ENCODE measurements at regions of chr5 and their contacts with region 1.

Region 1: DNA sequence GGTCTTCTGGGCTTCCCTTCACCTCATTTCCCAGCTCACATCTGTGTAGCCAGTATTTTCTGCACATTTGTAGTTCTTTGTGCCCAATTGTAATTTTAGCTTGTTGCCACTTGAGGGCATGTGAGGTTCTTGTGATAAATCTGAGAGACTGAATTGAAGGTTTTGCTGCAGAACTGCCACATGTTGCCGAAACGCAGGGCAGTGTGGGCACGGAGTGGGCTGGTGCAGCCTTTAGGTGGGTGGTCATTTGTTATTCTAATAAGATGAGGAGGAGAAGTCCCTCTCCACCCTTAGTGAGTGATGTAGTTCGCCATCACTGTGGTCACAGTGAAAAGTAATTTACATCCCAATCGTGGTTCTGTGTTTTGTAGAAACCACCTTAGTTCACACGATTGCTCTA is 21.2 kb downstream of the OTULIN start:
- DNase-seq: peak; percentile 68
- ATAC-seq: peak; percentile 96
- H3K4me3 ChIP-seq: no peak overlapping the region
- H3K27ac ChIP-seq: no peak overlapping the region
- H3K4me1 ChIP-seq: no peaks in the 10 kb centered on the region
- H3K27me3 ChIP-seq: no peaks in the 10 kb centered on the region
- CTCF ChIP-seq: peak; percentile 64 to 74 (median 71); a peak in 5 of 6 replicates
- EP300 ChIP-seq: no peak
- POLR2A ChIP-seq: no peak
- RAD21 ChIP-seq: peak; percentile 72

Region 2: GRCh38 chr5:14521748-14522147 is 164.0 kb before region 1 on chr5:
- CTCF ChIA-PET with region 1: no interaction called
- POLR2A ChIA-PET with region 1: no interaction called
- RAD21 ChIA-PET with region 1: no interaction called
- SMC1A ChIA-PET with region 1: no interaction called
- in situ Hi-C with region 1: no loop called
- intact Hi-C with region 1: no loop called
- DNase-seq: no peak
- ATAC-seq: no peak; the same call in 2 of the 3 replicates
- H3K4me3 ChIP-seq: no peak overlapping the region
- H3K27ac ChIP-seq: no peak overlapping the region
- H3K4me1 ChIP-seq: peaks cover 10% of the 10 kb centered on the region
- H3K27me3 ChIP-seq: no peaks in the 10 kb centered on the region
- CTCF ChIP-seq: no peak
- EP300 ChIP-seq: no peak
- POLR2A ChIP-seq: no peak
- RAD21 ChIP-seq: no peak

Region 3: DNA sequence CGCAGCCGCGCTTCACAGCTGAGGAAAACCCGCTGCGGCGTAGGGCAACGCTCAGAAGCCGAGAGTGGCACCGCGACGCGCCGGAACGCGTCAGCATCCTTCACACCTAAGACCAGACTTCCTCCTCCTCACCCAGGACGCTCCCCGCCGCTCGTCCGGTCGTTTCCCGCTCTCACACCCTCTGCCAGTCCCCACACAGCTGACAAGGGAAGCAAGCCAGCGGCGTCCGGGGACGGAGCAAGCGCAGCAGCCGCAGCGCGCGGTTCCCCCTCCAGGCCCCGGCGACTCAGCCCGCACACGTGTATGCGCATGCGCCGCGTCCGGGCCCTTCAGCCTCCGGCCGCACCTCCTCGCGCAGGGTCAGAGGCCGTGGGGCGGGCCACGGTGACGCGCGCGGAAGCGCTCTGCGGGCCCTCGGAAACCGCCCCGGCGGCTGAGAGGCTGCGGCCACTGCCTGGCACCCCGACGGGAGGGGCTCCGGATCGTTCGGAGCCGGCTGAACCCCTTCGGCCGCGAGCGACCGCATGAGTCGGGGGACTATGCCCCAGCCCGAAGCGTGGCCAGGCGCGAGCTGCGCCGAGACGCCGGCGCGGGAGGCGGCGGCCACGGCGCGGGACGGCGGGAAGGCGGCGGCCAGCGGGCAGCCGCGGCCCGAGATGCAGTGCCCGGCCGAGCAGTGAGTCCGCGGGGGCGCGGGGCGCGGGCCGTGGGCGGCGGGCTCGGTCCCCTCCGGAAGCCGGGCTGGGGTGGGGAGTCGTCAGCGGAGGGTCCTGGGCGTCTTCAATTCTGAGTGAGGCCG is 21.3 kb before region 1 on chr5 and contains the start of gene OTULIN:
- CTCF ChIA-PET with region 1: interaction called, 7 read pairs
- POLR2A ChIA-PET with region 1: interaction called, 7 read pairs
- RAD21 ChIA-PET with region 1: interaction called, 33 read pairs
- SMC1A ChIA-PET with region 1: interaction called, 16 read pairs
- in situ Hi-C with region 1: no loop called
- intact Hi-C with region 1: no loop called
- DNase-seq: peak; percentile 80
- ATAC-seq: peak; percentile 74
- H3K4me3 ChIP-seq: peak within 1 kb of the TSS; percentile 84
- H3K27ac ChIP-seq: peak within 1 kb of the TSS; percentile 90
- H3K4me1 ChIP-seq: peaks cover 3% of the 10 kb centered on the region
- H3K27me3 ChIP-seq: no peaks in the 10 kb centered on the region
- CTCF ChIP-seq: no peak
- EP300 ChIP-seq: 0 out of 4 replicates have a peak, but pooled peaks of 1 of the 2 experiments have one; percentile 9
- POLR2A ChIP-seq: peak; percentile 95
- RAD21 ChIP-seq: no peak
- polyA plus RNA-seq, gene OTULIN: 6.6 to 9.9 TPM

Region 4: DNA sequence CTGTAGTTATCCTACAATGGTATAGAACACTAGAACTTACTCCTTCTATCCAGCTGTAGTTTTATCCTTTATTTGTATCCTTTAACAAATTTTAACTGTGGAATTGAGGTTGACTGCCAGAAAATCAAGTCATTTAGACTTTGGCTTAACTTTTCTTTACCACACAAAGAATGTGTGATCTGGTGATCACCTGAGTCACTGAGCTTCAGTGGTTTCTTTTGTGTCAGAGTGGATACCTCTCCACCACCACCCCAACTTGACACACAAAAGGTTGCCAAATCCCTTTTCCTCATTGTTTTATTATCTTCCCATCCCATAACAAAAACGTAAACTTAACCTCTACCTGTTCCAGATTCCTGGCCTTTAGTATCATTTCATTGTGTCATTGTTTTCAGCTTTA is 15.8 kb before region 1 on chr5:
- CTCF ChIA-PET with region 1: interaction called, 17 read pairs
- POLR2A ChIA-PET with region 1: interaction called, 7 read pairs
- RAD21 ChIA-PET with region 1: interaction called, 33 read pairs
- SMC1A ChIA-PET with region 1: interaction called, 27 read pairs
- in situ Hi-C with region 1: no loop called
- intact Hi-C with region 1: no loop called
- DNase-seq: no peak
- ATAC-seq: no peak
- H3K4me3 ChIP-seq: no peak overlapping the region; the same call in 1 of the 2 replicates
- H3K27ac ChIP-seq: peak overlapping the region; percentile 62; the same call in 1 of the 2 replicates
- H3K4me1 ChIP-seq: peaks cover 41% of the 10 kb centered on the region
- H3K27me3 ChIP-seq: no peaks in the 10 kb centered on the region
- CTCF ChIP-seq: no peak
- EP300 ChIP-seq: no peak
- POLR2A ChIP-seq: no peak
- RAD21 ChIP-seq: no peak

Region 5: DNA sequence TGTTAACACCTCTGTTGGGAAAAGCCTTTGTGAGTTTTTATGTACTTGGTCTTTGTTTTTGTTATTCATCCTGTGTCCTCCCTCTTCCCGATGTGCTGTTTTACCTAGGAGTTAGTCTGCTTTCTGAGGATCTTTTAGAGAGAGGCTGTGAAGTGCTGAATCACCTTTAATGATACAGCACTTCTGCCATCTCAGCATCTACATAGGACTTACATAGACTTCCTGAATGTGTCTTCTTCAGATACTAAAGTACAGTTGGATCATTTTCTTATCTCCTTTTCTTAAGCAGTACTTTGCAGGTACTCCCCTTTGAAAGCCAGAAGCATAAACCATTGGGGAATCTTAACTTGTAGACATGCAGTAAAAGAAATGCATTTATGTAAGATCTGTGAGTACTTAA is 10.3 kb after region 1 on chr5:
- CTCF ChIA-PET with region 1: interaction called, 14 read pairs
- POLR2A ChIA-PET with region 1: interaction called, 3 read pairs
- RAD21 ChIA-PET with region 1: no interaction called
- SMC1A ChIA-PET with region 1: interaction called, 6 read pairs
- in situ Hi-C with region 1: no loop called
- intact Hi-C with region 1: no loop called
- DNase-seq: no peak
- ATAC-seq: no peak
- H3K4me3 ChIP-seq: no peak overlapping the region
- H3K27ac ChIP-seq: no peak overlapping the region
- H3K4me1 ChIP-seq: no peaks in the 10 kb centered on the region
- H3K27me3 ChIP-seq: no peaks in the 10 kb centered on the region
- CTCF ChIP-seq: no peak
- EP300 ChIP-seq: no peak
- POLR2A ChIP-seq: no peak
- RAD21 ChIP-seq: no peak

Region 6: DNA sequence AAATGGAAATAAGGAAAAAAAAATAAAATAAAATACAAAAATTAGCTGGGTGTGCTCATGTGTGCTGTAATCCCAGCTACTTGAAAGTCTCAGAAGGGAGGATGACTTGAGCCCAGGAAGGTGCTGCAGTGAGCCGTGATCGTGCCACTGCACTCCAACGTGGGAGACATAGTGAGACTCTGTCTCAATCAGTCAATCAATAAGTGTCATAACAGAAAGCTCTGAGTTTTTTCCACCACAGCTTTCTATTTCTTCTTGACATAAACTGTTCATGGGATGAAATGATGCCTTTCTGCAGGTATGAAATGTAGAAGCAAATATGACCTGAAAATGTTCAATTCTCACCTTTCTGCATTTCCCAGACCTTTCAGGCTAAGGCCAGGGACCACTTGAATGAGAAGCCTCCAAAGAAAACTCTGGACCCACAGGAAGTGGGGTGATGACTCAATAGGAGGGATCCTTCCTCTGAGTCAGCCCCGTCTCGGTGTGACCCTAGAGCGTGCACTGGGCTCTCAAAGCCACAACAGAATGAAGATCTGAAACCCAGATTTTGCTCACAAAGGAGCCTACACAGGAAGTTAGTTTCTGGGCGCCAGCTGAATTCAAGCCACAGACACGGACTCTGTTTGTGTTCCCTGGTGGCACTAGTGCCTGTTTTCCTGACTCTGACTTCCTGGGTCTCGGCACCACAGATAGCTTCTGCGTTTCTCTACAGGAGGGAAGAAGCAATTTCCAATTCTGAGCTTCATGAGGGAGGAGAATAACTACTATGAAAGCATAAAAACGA is 123.8 kb after region 1 on chr5:
- CTCF ChIA-PET with region 1: no interaction called
- POLR2A ChIA-PET with region 1: no interaction called
- RAD21 ChIA-PET with region 1: no interaction called
- SMC1A ChIA-PET with region 1: no interaction called
- in situ Hi-C with region 1: no loop called
- intact Hi-C with region 1: no loop called
- DNase-seq: peak; percentile 88
- ATAC-seq: peak; percentile 97
- H3K4me3 ChIP-seq: peak overlapping the region; percentile 50; the same call in 1 of the 2 replicates
- H3K27ac ChIP-seq: peak overlapping the region; percentile 79
- H3K4me1 ChIP-seq: peaks cover 19% of the 10 kb centered on the region
- H3K27me3 ChIP-seq: no peaks in the 10 kb centered on the region
- CTCF ChIP-seq: no peak
- EP300 ChIP-seq: peak; percentile 92 to 96
- POLR2A ChIP-seq: 0 out of 2 replicates have a peak, but pooled peaks have one; percentile 40
- RAD21 ChIP-seq: peak; percentile 20; the same call in 1 of the 2 replicates

Region 7: GRCh38 chr5:14879937-14880589 is 194.3 kb after region 1 on chr5:
- CTCF ChIA-PET with region 1: no interaction called
- POLR2A ChIA-PET with region 1: no interaction called
- RAD21 ChIA-PET with region 1: no interaction called
- SMC1A ChIA-PET with region 1: no interaction called
- in situ Hi-C with region 1: no loop called
- intact Hi-C with region 1: no loop called
- DNase-seq: no peak
- ATAC-seq: no peak
- H3K4me3 ChIP-seq: no peak overlapping the region
- H3K27ac ChIP-seq: no peak overlapping the region
- H3K4me1 ChIP-seq: no peaks in the 10 kb centered on the region
- H3K27me3 ChIP-seq: no peaks in the 10 kb centered on the region
- CTCF ChIP-seq: no peak
- EP300 ChIP-seq: no peak
- POLR2A ChIP-seq: no peak
- RAD21 ChIP-seq: no peak

Measured in GM12878 (cell line).